ENCODE measurements at regions of chr12 and their contacts with region 1.

Region 1: DNA sequence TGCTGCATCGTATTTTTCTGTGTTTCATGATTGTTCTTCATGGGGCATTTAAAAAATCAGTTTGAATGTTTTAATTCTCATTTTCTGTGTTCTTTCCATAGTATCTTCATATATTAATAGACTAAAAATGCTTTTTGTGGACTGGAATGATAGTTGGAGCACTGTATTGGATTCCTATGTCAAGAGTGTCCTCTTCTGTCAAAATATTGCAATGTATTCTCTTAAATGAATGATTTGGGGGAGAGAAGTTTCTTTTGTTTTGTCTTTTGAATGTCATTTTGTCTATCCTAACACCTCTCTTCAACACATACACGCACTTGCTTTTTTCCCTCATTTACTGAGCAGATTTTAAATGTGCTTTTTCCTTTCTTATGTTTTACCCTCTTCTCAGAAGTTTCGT is 4.7 kb upstream of the EIF2S3B start:
- DNase-seq: no peak
- ATAC-seq: no peak
- H3K4me3 Mint-ChIP-seq: peak overlapping the region; percentile 47
- H3K27ac Mint-ChIP-seq: peak overlapping the region; percentile 78
- H3K4me1 Mint-ChIP-seq: peaks cover 65% of the 10 kb centered on the region
- H3K27me3 Mint-ChIP-seq: no peaks in the 10 kb centered on the region
- CTCF ChIP-seq: peak; percentile 38

Region 2: DNA sequence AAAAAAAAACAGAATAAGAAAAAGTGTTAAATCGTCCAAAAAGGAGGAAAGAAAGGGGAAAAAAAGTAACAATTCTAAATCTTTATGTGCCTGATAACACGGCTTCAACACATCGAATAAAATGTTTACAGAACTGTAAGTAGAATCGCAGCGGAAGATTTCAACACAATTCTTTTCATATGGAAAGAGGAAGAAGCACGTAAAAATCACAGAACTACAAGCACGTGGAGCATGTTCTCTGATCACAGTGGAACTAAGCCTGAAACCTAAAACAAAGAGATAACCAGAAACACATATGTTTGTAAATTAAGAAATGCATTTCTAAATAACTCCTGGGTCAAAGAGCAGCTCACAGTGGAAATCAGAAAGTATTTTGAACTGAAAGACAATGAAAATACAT is 379.8 kb before region 1 on chr12:
- CTCF ChIA-PET with region 1: no interaction called
- POLR2A ChIA-PET with region 1: no interaction called
- intact Hi-C with region 1: no loop called
- DNase-seq: no peak
- ATAC-seq: no peak
- H3K4me3 Mint-ChIP-seq: no peak overlapping the region
- H3K27ac Mint-ChIP-seq: no peak overlapping the region
- H3K4me1 Mint-ChIP-seq: no peaks in the 10 kb centered on the region
- H3K27me3 Mint-ChIP-seq: peaks cover 2% of the 10 kb centered on the region
- CTCF ChIP-seq: no peak

Region 3: DNA sequence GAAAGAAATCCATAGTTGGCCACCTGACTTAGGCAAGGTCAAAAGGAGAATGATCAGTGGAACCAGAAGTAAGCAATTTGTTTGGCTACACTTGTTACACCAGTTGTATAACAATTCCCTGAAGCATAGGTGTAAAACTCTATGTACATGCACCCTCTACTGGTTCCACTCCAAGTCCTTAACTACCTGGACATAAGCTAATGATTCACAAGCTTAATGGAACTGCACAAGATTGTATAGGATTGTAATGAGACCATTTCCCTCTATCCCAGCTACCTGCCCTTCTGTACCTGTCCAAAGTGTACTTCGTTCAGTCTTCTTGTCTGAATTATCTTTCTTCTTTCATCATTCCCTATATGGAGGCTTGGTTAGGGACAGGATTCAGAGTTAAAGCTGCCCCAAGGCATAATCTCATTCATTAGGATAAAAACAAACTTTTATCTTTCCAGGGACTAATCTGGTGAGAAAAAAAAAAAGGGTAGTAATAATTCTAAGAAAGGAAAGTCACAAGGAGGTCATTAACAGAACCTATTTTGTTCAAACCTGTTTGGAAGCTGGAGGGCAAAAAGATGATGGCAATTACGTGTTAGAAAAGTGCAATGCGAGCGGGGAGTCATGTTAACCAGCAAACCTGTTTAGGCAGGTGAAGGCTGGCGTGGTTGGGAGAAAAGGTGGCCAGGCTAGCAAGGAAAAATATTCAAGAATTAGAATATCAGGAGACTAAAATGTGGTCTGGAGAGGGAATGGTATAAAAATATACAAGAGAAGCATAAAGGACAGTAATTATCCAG is 325.0 kb before region 1 on chr12:
- CTCF ChIA-PET with region 1: no interaction called
- POLR2A ChIA-PET with region 1: no interaction called
- intact Hi-C with region 1: no loop called
- DNase-seq: no peak
- ATAC-seq: no peak
- H3K4me3 Mint-ChIP-seq: no peak overlapping the region
- H3K27ac Mint-ChIP-seq: no peak overlapping the region
- H3K4me1 Mint-ChIP-seq: no peaks in the 10 kb centered on the region
- H3K27me3 Mint-ChIP-seq: peaks cover 7% of the 10 kb centered on the region
- CTCF ChIP-seq: no peak

Region 4: GRCh38 chr12:10320643-10321042 is 180.4 kb before region 1 on chr12:
- CTCF ChIA-PET with region 1: no interaction called
- POLR2A ChIA-PET with region 1: no interaction called
- intact Hi-C with region 1: loop called (anchors 10 kb)
- DNase-seq: peak; percentile 34
- ATAC-seq: peak; percentile 90
- H3K4me3 Mint-ChIP-seq: no peak overlapping the region
- H3K27ac Mint-ChIP-seq: peak overlapping the region; percentile 85
- H3K4me1 Mint-ChIP-seq: peaks cover 47% of the 10 kb centered on the region
- H3K27me3 Mint-ChIP-seq: no peaks in the 10 kb centered on the region
- CTCF ChIP-seq: no peak

Region 5: GRCh38 chr12:10395390-10395998 is 105.5 kb before region 1 on chr12:
- CTCF ChIA-PET with region 1: no interaction called
- POLR2A ChIA-PET with region 1: no interaction called
- intact Hi-C with region 1: loop called (anchors 5 kb)
- DNase-seq: no peak
- ATAC-seq: peak; percentile 45
- H3K4me3 Mint-ChIP-seq: peak overlapping the region; percentile 63
- H3K27ac Mint-ChIP-seq: peak overlapping the region; percentile 97
- H3K4me1 Mint-ChIP-seq: peaks cover 64% of the 10 kb centered on the region
- H3K27me3 Mint-ChIP-seq: no peaks in the 10 kb centered on the region
- CTCF ChIP-seq: no peak

Region 6: DNA sequence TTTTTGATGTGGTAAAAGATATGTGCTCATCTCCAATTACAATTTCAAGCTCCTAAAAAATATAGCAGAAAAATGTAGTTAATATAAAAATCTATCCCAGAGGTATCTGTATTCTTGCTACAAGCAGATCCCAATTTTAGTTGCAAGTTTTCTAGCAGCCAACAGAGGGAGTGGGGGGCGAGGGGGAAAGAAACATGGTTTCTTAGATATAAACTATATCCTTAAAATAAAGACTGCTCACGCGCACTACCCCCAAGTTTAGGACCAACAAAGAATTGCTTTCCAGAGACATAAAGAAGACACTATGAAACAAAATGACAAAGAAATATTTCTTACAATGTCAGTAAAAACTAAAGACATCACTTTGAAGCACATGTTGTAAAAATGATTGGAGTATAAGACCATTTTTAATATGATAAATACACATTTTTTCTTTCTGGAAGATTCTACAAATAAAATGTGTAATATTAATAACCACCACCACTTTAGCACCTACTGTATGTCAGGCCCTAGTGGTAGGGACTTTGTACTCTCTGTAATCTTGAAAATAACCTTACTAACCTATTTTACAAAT is 106.9 kb after region 1 on chr12:
- CTCF ChIA-PET with region 1: no interaction called
- POLR2A ChIA-PET with region 1: no interaction called
- intact Hi-C with region 1: no loop called
- DNase-seq: peak; percentile 19
- ATAC-seq: no peak
- H3K4me3 Mint-ChIP-seq: no peak overlapping the region
- H3K27ac Mint-ChIP-seq: no peak overlapping the region
- H3K4me1 Mint-ChIP-seq: peaks cover 27% of the 10 kb centered on the region
- H3K27me3 Mint-ChIP-seq: no peaks in the 10 kb centered on the region
- CTCF ChIP-seq: peak; percentile 35